ENCODE measurements at regions of chr1 and their contacts with region 1.

Region 1: DNA sequence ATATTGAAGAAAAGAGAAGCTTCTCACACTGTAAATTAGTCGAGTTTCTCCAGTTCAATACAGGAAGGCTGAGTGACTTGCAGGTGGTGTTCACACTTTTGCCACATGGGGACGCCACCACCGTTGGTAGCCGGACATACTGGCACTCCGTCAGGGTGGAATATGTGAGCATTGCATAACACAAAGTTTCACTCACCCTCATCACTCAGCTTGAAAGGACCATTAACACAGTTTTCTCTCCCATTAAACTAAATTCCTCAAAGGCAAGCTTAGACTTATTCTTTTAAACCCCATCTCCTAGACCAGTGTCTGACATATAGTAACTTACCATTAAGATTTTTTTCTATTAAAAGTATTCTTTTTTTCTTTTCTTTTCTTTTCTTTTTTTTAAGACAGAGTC is 105.3 kb upstream of the SERBP1 start:
- DNase-seq: peak; percentile 8
- H3K4me3 Mint-ChIP-seq: no peak overlapping the region
- H3K27ac Mint-ChIP-seq: no peak overlapping the region
- H3K4me1 Mint-ChIP-seq: no peaks in the 10 kb centered on the region
- H3K27me3 Mint-ChIP-seq: peaks cover 6% of the 10 kb centered on the region

Region 2: GRCh38 chr1:67561704-67562113 is 26.2 kb after region 1 on chr1:
- intact Hi-C with region 1: loop called (anchors 1 kb)
- DNase-seq: peak; percentile 69
- H3K4me3 Mint-ChIP-seq: no peak overlapping the region
- H3K27ac Mint-ChIP-seq: no peak overlapping the region
- H3K4me1 Mint-ChIP-seq: peaks cover 5% of the 10 kb centered on the region
- H3K27me3 Mint-ChIP-seq: peaks cover 16% of the 10 kb centered on the region

Measured in activated T-helper 1 cell treated with anti-CD3 and anti-CD28 coated beads, Interleukin-12 subunit alpha, Interleukin-12 subunit beta, Interleukin-2, Interleukin-4 antibody, amounts not matched to agents 30 ng/mL and 10 ng/mL and 1 ng/mL, durations not matched to agents 14 hours and 24 hours and 36 hours (primary cell).